Colonic mucosa (tissue), 4 donors: ENCODE measurements at regions of chr12 and their contacts with region 1.

Region 1: GRCh38 chr12:111405149-111405860 is 418 bp upstream of the SH2B3 start:
- DNase-seq: peak; percentile 99
- H3K4me3 ChIP-seq: peak overlapping the region; percentile 92
- H3K27ac ChIP-seq: peak overlapping the region; percentile 84
- H3K4me1 ChIP-seq: peaks cover 17% of the 10 kb centered on the region
- H3K27me3 ChIP-seq: no peaks in the 10 kb centered on the region
- CTCF ChIP-seq: peak; percentile 58

Region 2: DNA sequence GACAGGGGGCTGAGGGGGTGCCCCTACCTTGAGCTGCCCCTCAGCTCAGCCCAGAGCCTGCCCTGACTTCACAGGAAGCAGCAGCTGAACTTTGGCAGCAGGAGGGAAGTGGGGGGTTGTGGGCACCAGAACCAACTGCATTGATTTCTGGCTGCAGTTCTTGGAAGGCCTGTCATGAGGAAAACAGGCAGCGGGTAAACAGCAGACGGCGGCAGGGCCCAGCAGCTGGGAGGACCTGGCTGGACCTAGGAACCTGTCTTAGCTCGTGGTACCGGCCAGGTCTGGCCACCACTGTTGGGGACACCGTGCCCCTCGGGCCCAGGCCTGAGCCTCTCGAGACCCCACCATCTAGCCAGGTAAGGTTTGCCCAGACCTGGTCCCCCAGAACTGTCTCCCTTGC is 330.7 kb before region 1 on chr12:
- intact Hi-C with region 1: no loop called
- DNase-seq: no peak
- H3K4me3 ChIP-seq: no peak overlapping the region
- H3K27ac ChIP-seq: no peak overlapping the region
- H3K4me1 ChIP-seq: no peaks in the 10 kb centered on the region
- H3K27me3 ChIP-seq: no peaks in the 10 kb centered on the region
- CTCF ChIP-seq: no peak

Region 3: GRCh38 chr12:111451649-111452129 is 46.4 kb after region 1 on chr12:
- intact Hi-C with region 1: loop called (anchors 1 kb)
- DNase-seq: no peak
- H3K4me3 ChIP-seq: no peak overlapping the region
- H3K27ac ChIP-seq: no peak overlapping the region
- H3K4me1 ChIP-seq: peaks cover 2% of the 10 kb centered on the region
- H3K27me3 ChIP-seq: no peaks in the 10 kb centered on the region
- CTCF ChIP-seq: peak; percentile 76

Region 4: DNA sequence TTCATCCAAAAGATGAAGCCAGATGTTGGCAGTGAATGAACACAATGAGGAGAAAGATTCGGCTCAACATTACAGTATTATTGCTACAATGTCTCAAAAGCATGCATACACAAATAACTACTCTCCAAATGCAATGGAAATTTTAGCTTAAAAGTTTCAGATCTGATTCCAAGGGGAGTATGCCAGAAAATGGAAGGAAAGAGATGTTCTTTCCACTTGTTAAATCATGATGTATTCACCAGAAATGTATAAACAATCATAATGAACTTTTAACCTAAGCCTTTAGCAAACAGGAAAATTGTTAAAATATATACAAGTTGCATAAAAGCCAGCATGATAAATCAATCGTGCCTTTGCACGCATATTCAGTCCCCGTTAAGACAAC is 62.5 kb after region 1 on chr12:
- intact Hi-C with region 1: no loop called
- DNase-seq: no peak
- H3K4me3 ChIP-seq: no peak overlapping the region
- H3K27ac ChIP-seq: no peak overlapping the region
- H3K4me1 ChIP-seq: no peaks in the 10 kb centered on the region
- H3K27me3 ChIP-seq: no peaks in the 10 kb centered on the region
- CTCF ChIP-seq: no peak